ENCODE measurements at regions of chr3 and their contacts with region 1.

Region 1: DNA sequence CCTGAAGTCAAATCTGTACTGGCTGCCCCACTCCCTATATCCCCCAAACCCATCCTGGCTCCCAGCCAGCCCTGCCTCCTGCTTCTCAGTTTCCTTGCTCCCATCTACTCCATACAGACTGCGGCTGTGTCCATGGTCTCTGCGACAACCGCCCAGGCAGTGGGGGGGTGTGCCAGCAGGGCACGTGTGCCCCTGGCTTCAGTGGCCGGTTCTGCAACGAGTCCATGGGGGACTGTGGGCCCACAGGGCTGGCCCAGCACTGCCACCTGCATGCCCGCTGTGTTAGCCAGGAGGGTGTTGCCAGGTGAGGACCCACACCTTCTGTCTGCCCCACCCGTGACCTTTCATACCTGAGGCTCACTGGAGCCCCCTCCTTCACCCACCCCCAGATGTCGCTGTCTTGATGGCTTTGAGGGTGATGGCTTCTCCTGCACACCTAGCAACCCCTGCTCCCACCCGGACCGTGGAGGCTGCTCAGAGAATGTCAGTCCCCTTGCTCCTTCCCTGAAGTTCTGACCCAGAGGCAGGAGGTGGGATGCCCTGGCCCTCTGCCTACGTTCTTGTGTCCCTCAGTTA is 14.7 kb downstream of the STAB1 start:
- DNase-seq: no peak
- H3K4me3 ChIP-seq: no peak overlapping the region
- H3K27ac ChIP-seq: no peak overlapping the region
- H3K4me1 ChIP-seq: peaks cover 0 to 4% (median 0%) of the 10 kb centered on the region in 4 experiments; a peak in 1 of 7 replicates
- H3K27me3 ChIP-seq: no peaks in the 10 kb centered on the region
- CTCF ChIP-seq: peak in 1 of 3 experiments; percentile 12; a peak in 1 of 4 replicates
- EP300 ChIP-seq: no peak
- POLR2A ChIP-seq: no peak
- RAD21 ChIP-seq: 0 out of 4 replicates have a peak, but pooled peaks of 1 of the 2 experiments have one; percentile 22

Region 2: DNA sequence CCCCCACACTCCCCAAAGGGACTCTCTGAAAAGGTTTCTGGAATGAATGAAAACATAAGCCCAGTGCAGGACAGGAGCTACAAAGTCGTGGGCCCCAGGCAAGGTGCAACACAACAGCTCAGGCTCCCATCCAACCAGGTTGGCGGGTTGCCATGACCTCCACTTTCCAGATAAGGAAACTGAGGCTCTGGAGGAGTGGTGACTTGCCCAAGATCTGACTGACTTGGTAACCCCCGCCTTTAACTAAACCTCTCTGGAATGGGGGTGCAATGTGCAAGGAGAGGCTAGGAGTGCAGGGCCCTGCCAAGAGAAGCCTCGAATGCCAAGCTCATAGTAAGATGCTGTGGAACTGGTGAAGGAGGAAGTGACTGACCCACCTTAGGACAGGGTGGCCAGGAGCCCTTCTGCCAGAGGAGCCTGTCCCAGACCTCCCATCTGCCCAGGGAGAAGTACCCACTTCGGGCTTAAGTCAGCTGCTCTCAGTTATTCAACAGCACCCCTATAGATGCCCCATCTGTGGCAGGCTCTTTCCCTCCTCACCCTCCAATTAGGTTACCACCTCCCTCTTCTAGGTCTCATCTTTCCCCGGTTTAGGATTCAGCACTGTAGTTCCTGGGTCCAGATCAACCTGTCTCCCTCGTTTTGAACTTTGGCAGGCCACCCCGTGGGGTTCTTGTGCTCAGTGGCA is 55.4 kb before region 1 on chr3:
- CTCF ChIA-PET with region 1: no interaction called
- POLR2A ChIA-PET with region 1: no interaction called
- DNase-seq: no peak
- H3K4me3 ChIP-seq: no peak overlapping the region
- H3K27ac ChIP-seq: no peak overlapping the region
- H3K4me1 ChIP-seq: peaks cover 0 to 32% (median 14%) of the 10 kb centered on the region in 4 experiments; a peak in 6 of 7 replicates
- H3K27me3 ChIP-seq: no peaks in the 10 kb centered on the region
- CTCF ChIP-seq: no peak
- EP300 ChIP-seq: no peak
- POLR2A ChIP-seq: no peak
- RAD21 ChIP-seq: no peak

Region 3: GRCh38 chr3:52498137-52499054 is 11.4 kb before region 1 on chr3:
- CTCF ChIA-PET with region 1: interaction called, 10 read pairs
- POLR2A ChIA-PET with region 1: interaction called, 4 read pairs
- DNase-seq: no peak
- H3K4me3 ChIP-seq: no peak overlapping the region
- H3K27ac ChIP-seq: no peak overlapping the region
- H3K4me1 ChIP-seq: peaks cover 0 to 6% (median under 1%) of the 10 kb centered on the region in 4 experiments; a peak in 3 of 7 replicates
- H3K27me3 ChIP-seq: no peaks in the 10 kb centered on the region; a peak in 2 of 7 replicates
- CTCF ChIP-seq: no peak
- EP300 ChIP-seq: no peak
- POLR2A ChIP-seq: no peak
- RAD21 ChIP-seq: no peak

Region 4: GRCh38 chr3:52779011-52779836 is 269.4 kb after region 1 on chr3:
- CTCF ChIA-PET with region 1: no interaction called
- POLR2A ChIA-PET with region 1: no interaction called
- DNase-seq: no peak
- H3K4me3 ChIP-seq: no peak overlapping the region
- H3K27ac ChIP-seq: no peak overlapping the region
- H3K4me1 ChIP-seq: peaks cover 0 to 8% (median 0%) of the 10 kb centered on the region in 4 experiments; a peak in 1 of 7 replicates
- H3K27me3 ChIP-seq: no peaks in the 10 kb centered on the region; a peak in 1 of 7 replicates
- CTCF ChIP-seq: no peak
- EP300 ChIP-seq: no peak
- POLR2A ChIP-seq: no peak
- RAD21 ChIP-seq: no peak